Caco-2 (cell line): ENCODE measurements at regions of chr3 and their contacts with region 1.

Region 1: DNA sequence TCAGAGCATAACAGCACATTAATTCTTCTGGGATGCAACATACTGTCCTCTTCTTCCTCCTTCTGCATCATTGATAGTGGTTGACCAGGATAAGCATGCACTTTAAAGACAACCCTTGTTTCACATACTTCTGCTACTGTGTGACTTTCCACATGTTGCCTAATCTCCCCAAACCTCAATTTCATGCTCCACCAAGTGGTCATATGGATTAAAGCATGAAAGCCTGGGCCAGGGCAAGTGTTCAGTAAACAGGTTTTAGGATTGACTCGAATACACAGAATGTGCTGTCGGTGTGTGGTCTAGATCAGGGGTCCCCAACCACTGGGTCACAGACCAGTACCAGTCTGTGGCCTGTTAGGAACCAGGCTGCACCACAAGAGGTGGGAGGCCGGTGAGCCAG is 22.5 kb upstream of the BFSP2 start:
- DNase-seq: peak in 1 of 2 experiments; percentile 38
- H3K4me3 ChIP-seq: no peak overlapping the region
- H3K4me3 Mint-ChIP-seq: no peak overlapping the region
- H3K27ac Mint-ChIP-seq: no peak overlapping the region
- H3K4me1 ChIP-seq: no peaks in the 10 kb centered on the region
- H3K4me1 Mint-ChIP-seq: no peaks in the 10 kb centered on the region
- H3K27me3 ChIP-seq: no peaks in the 10 kb centered on the region
- H3K27me3 Mint-ChIP-seq: peaks cover 4% of the 10 kb centered on the region
- CTCF ChIP-seq: peak; percentile 32 to 34

Region 2: DNA sequence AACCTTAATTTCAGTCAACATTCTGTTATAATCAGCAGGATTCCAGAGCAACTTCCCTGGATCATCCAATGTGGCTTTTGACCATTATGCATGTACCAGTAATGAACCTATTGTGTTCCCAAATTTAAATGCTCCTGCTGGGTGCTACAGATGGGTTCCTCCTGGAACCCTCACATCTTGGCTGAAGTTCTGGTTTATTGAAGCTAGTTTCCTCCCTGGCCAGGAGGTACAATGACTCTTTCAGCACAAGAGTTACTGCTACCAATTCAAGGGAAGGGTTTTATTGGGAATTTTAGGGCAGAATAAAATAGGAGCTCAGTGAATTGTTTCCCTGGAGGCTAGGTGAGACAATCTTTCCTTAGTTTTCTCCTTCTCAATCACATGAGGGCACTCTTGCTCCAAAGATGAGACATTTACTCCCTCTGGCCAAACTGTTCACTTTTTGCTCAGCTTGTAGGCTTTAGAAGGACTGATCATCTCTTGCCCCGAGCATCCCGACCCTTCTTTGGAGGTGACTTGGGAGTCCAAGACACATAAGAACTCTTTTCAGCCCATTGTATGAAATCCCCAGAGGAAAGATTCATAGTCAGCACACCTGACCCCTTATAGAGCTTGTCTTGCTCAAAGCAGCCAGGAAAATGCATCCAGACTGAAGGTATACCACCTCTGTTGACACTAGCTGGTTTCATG is 646.4 kb before region 1 on chr3:
- CTCF ChIA-PET with region 1: interaction called, 6 read pairs
- POLR2A ChIA-PET with region 1: no interaction called
- intact Hi-C with region 1: loop called (anchors 2 kb)
- DNase-seq: peak in 1 of 2 experiments; percentile 47
- H3K4me3 ChIP-seq: no peak overlapping the region
- H3K4me3 Mint-ChIP-seq: no peak overlapping the region
- H3K27ac Mint-ChIP-seq: no peak overlapping the region
- H3K4me1 ChIP-seq: peaks cover 1% of the 10 kb centered on the region; the same call in 1 of the 2 replicates
- H3K4me1 Mint-ChIP-seq: no peaks in the 10 kb centered on the region
- H3K27me3 ChIP-seq: no peaks in the 10 kb centered on the region
- H3K27me3 Mint-ChIP-seq: peaks cover 8% of the 10 kb centered on the region
- CTCF ChIP-seq: peak in 1 of 2 experiments; percentile 44